Transverse colon (tissue), 4 donors: ENCODE measurements at regions of chr4 and their contacts with region 1.

Region 1: GRCh38 chr4:74189331-74190043 is 31.6 kb downstream of the MTHFD2L start:
- DNase-seq: no peak
- H3K4me3 ChIP-seq: no peak overlapping the region
- H3K27ac ChIP-seq: no peak overlapping the region
- H3K4me1 ChIP-seq: no peaks in the 10 kb centered on the region
- H3K27me3 ChIP-seq: no peaks in the 10 kb centered on the region
- CTCF ChIP-seq: peak; percentile 53 to 64 (median 62)
- EP300 ChIP-seq: no peak
- POLR2A ChIP-seq: no peak

Region 2: DNA sequence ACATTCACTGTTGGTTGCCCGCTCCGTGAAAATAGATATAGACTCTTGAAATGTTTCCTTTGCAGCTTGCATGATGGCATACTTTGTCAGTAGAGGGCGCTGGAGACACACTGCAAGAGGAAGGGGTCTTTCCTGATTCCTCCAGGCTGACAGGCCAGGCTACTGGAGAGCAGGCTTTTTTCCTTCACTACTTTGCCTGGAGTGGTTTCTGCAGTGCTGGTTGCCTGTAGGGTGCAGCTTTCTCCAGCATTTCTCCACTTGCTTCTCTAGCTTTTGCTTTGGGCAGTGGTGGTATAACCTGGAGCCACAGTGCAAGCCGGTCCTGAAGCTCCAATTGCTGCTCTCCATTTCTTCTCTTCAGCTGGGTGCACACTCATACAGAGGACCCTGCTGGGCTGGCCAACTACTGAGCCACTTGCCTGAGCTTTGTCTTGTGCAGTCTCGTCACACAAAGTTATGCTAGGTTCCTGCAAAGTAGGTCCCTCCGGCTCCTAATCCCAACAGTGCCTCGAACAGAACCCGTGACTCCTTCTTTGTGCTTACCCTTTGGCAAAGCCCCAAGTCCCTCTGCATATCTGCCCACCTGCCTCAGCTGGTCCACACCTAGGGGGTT is 615.6 kb before region 1 on chr4:
- in situ Hi-C with region 1: no loop called
- intact Hi-C with region 1: no loop called
- DNase-seq: peak; percentile 66
- H3K4me3 ChIP-seq: no peak overlapping the region
- H3K27ac ChIP-seq: no peak overlapping the region
- H3K4me1 ChIP-seq: no peaks in the 10 kb centered on the region
- H3K27me3 ChIP-seq: no peaks in the 10 kb centered on the region
- CTCF ChIP-seq: peak; percentile 69 to 75 (median 72)
- EP300 ChIP-seq: no peak
- POLR2A ChIP-seq: no peak

Region 3: DNA sequence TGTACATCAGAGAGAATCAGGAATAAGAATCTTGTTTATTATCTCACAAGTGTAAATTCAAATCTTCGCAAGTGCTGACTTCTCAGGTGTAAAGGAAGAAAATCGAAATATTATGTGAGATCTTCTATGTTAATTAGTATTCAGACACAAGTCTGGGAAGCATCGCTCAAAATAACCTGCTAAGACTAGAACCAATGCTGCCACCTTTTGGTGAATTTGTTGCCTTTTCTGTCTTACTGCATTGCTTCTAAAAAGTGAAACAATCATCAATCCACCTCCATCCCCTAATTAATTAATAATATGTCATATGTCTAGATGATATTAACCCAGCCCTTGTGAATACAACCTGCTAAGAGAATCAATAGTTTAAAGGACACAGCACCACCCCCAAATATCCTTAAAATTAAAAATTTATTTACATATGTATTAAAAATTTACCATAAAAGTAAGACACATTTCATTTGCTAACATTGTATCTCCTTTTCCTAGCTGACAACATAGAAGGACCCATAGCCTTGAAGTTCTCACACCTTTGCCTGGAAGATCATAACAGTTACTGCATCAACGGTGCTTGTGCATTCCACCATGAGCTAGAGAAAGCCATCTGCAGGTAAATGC is 122.3 kb after region 1 on chr4:
- in situ Hi-C with region 1: loop called (anchors 10 to 25 kb)
- intact Hi-C with region 1: no loop called
- DNase-seq: no peak
- H3K4me3 ChIP-seq: no peak overlapping the region
- H3K27ac ChIP-seq: no peak overlapping the region
- H3K4me1 ChIP-seq: no peaks in the 10 kb centered on the region
- H3K27me3 ChIP-seq: no peaks in the 10 kb centered on the region
- CTCF ChIP-seq: peak; percentile 20 to 55 (median 45)
- EP300 ChIP-seq: no peak
- POLR2A ChIP-seq: no peak

Region 4: GRCh38 chr4:74320559-74321118 is 131.2 kb after region 1 on chr4:
- in situ Hi-C with region 1: loop called in 1 of 4 experiments (anchors 25 kb)
- intact Hi-C with region 1: no loop called
- DNase-seq: peak; percentile 43
- H3K4me3 ChIP-seq: no peak overlapping the region
- H3K27ac ChIP-seq: no peak overlapping the region
- H3K4me1 ChIP-seq: peaks cover 0 to 4% (median 0%) of the 10 kb centered on the region in 4 donors
- H3K27me3 ChIP-seq: no peaks in the 10 kb centered on the region
- CTCF ChIP-seq: peak; percentile 20 to 67 (median 55)
- EP300 ChIP-seq: no peak
- POLR2A ChIP-seq: no peak